Heart right ventricle (tissue), 16 donors: ENCODE measurements at regions of chr3 and their contacts with region 1.

Region 1: DNA sequence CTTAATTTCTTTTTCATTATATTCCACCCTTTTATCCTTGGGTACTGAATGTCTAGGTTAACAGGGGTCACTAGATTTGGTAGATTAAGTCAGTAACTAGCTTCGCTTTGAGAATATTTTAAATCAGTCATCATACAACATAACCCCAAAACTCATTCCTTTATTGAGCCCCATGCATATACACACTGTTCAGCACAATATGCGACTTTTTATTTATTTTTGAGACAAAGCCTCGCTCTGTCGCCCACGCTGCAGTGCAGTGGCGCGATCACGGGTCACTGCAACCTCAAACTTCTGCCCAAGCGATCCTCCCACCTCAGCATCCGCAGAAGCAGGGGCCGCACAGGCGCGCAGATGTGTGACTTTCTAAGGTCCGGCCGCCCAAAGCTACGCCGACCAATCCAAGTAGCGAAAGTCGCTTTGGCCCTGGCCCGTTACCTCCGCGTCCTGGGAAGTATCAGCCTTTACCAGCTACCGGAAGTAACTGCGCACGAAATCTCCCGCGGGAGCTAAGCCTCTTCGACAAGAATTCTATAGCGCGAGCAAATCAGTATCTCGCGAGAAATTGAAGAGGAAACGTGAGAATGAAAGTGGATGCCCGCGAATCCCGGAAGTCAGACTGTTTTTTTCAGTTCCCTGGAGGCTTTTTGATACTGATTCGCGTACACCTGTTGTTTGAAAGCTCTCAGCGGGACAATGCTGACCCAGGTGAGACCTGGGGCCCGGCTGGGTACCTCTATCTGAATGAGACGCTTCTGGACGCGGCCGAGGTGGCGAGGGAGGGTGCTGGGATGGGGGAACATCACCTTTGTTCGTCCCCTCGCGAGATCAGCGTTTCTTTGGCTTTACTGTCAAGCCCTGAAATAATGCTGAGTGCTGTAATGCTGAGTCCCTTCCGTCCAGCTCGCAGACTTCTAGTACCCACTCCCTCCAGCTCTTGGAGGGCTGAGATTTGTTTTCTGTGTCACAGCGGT is at the starts of genes DHFR2 and NSUN3:
- DNase-seq: peak; percentile 89 to 93
- ATAC-seq: peak; percentile 91 to 98 (median 98)
- H3K4me3 ChIP-seq: peak within 1 kb of the TSS; percentile 42 to 83 (median 68)
- H3K27ac ChIP-seq: peak within 1 kb of the TSS; percentile 65 to 98 (median 90)
- H3K4me1 ChIP-seq: peaks cover 0 to 44% (median 22%) of the 10 kb centered on the region in 9 donors
- H3K27me3 ChIP-seq: no peaks in the 10 kb centered on the region
- CTCF ChIP-seq: no peak
- total RNA-seq, gene DHFR2: 2.6 to 4.9 (median 3.0) TPM
- total RNA-seq, gene NSUN3: 5.9 to 9.6 (median 7.1) TPM

Region 2: GRCh38 chr3:93979833-93980676 is 82.7 kb before region 1 on chr3 and contains the start of gene ARL13B:
- intact Hi-C with region 1: loop called in 1 of 10 experiments (anchors 2 kb)
- DNase-seq: peak; percentile 96 to 98
- ATAC-seq: peak; percentile 100
- H3K4me3 ChIP-seq: peak within 1 kb of the TSS; percentile 63 to 94 (median 78)
- H3K27ac ChIP-seq: peak within 1 kb of the TSS; percentile 37 to 95 (median 90)
- H3K4me1 ChIP-seq: peaks cover 0 to 20% (median 11%) of the 10 kb centered on the region in 9 donors
- H3K27me3 ChIP-seq: no peaks in the 10 kb centered on the region
- CTCF ChIP-seq: no peak
- total RNA-seq, gene ARL13B: 3.1 to 7.4 (median 4.3) TPM